ENCODE measurements at regions of chr17 and their contacts with region 1.

Region 1: GRCh38 chr17:59707114-59707970 is at the starts of genes PTRH2 and VMP1:
- DNase-seq: peak; percentile 100
- ATAC-seq: peak; percentile 97
- H3K4me3 ChIP-seq: peak within 1 kb of the TSS; percentile 89 to 95
- H3K27ac ChIP-seq: peak within 1 kb of the TSS; percentile 87
- H3K4me1 ChIP-seq: peaks cover 19 to 34% of the 10 kb centered on the region in 2 experiments; a peak in 3 of 4 replicates
- H3K27me3 ChIP-seq: no peaks in the 10 kb centered on the region
- CTCF ChIP-seq: no peak
- POLR2A ChIP-seq: peak; percentile 93
- RAD21 ChIP-seq: no peak
- total RNA-seq, gene PTRH2: 59.6 TPM
- total RNA-seq, gene VMP1: 366 TPM

Region 2: DNA sequence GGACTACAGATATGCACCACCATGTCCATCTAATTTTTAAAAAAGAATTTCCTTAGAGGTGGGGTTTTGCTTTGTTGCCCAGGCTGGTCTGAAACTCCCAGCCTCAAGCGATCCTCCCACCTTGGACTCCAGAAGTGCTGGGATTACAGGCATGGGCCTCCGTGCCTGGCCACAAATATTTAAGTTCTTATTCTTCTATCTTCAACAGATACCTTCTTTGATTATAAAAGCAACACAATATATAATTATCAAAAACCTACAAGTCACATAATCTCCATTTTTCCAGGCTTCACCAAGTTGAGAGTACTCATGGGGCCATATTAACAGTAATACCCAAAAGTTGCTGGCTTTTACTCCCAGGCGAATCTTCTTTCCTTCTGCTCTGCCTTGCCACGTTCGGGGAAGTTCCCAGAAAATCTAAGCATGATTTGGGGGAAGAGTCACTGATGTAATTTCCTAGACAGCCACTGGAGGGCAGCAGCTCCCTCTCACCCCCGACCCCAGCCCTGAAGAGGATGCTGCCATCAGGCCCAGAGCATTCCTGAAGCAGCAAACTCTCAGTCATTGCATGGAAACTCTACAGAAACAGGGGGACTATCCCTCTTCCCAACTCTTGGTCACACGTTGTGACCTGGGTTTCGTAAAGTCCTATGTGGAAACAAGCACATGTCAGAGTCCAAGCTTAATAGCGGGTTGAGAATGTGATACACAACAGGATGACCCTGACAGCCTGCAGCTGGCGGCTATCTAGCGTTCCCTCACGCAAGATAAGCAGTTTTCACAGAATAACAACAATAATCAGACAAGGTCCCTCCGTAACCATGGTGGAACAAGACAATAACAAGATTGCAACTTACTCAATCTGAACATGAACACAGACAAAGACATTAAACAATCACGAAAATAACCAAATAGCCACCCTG is 185.9 kb before region 1 on chr17:
- CTCF ChIA-PET with region 1: no interaction called
- POLR2A ChIA-PET with region 1: no interaction called
- RAD21 ChIA-PET with region 1: no interaction called
- intact Hi-C with region 1: no loop called
- DNase-seq: peak; percentile 49
- ATAC-seq: peak; percentile 98
- H3K4me3 ChIP-seq: no peak overlapping the region
- H3K27ac ChIP-seq: no peak overlapping the region
- H3K4me1 ChIP-seq: peaks cover 0 to 10% of the 10 kb centered on the region in 2 experiments; a peak in 2 of 4 replicates
- H3K27me3 ChIP-seq: no peaks in the 10 kb centered on the region
- CTCF ChIP-seq: peak; percentile 82 to 98 (median 96)
- POLR2A ChIP-seq: no peak
- RAD21 ChIP-seq: peak; percentile 92

Region 3: DNA sequence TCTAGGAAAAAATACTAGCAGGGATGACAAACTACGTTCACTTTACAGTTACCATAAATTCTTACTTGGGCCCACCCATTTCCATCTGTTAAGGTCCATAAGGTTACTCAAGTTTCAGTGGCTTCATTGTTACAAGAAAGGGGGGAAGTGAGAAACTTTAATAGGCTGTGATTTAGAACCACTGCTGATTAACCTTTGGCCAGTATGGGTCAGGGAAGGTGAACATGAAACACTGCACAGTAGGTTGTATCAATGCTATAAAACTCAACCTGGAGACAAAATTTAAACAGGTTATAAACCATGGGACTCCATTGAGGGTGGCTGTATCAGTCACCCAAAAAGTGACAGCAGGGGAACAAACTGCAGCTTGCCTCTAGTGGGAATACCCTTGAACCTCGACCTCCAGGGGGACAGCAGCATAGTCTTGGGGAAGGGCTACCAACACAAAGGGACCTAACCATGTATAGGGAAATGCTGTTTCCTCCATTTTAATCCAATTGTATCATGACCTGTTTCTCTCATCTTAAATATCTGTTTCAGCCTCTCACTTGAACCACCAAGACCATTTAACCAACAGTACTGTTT is 10.6 kb before region 1 on chr17:
- CTCF ChIA-PET with region 1: no interaction called
- POLR2A ChIA-PET with region 1: interaction called, 12 read pairs
- RAD21 ChIA-PET with region 1: no interaction called
- intact Hi-C with region 1: no loop called
- DNase-seq: no peak
- ATAC-seq: peak; percentile 24; the same call in 1 of the 2 replicates
- H3K4me3 ChIP-seq: no peak overlapping the region
- H3K27ac ChIP-seq: no peak overlapping the region
- H3K4me1 ChIP-seq: no peaks in the 10 kb centered on the region
- H3K27me3 ChIP-seq: no peaks in the 10 kb centered on the region
- CTCF ChIP-seq: no peak
- POLR2A ChIP-seq: no peak
- RAD21 ChIP-seq: no peak

Region 4: DNA sequence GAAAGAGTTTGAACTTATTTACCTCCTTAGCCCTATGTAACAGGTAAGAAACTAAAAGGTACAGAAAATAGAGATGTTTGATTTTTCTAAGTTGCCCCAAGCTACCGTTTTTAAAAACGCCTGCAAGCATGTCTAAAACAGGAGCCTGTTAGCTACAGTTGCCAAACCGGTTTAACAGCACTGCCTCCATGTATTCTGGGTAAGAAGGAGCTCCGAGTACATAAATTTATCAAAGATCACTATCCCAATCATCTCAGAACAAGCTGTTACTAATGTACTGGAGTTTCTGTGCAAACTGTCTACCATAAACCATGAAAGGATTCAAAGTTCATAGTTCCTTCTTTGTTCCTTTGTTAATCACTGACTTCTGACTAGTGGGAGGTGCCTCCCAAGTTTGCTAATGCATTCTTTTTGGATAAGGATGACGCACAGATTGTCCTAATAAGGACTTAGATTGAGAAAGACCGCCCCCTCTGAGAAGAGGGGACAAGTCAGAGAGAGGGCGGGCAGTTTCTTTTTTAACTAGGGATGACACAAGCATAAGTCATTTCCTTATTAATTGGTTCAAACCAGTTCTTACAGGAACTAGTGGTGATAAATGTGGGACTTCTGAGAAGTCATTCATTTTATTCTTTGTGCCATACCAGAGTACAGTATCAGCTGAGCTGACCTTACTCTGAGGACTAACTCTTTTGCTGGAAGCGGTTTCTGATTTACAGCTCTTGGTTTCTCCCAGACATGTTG is 130.1 kb after region 1 on chr17:
- CTCF ChIA-PET with region 1: no interaction called
- POLR2A ChIA-PET with region 1: interaction called, 18 read pairs
- RAD21 ChIA-PET with region 1: no interaction called
- intact Hi-C with region 1: no loop called
- DNase-seq: peak; percentile 100
- ATAC-seq: peak; percentile 81
- H3K4me3 ChIP-seq: peak overlapping the region; percentile 74 to 78
- H3K27ac ChIP-seq: peak overlapping the region; percentile 97
- H3K4me1 ChIP-seq: peaks cover 65 to 84% of the 10 kb centered on the region in 2 experiments
- H3K27me3 ChIP-seq: no peaks in the 10 kb centered on the region
- CTCF ChIP-seq: no peak
- POLR2A ChIP-seq: peak; percentile 99
- RAD21 ChIP-seq: no peak

Region 5: DNA sequence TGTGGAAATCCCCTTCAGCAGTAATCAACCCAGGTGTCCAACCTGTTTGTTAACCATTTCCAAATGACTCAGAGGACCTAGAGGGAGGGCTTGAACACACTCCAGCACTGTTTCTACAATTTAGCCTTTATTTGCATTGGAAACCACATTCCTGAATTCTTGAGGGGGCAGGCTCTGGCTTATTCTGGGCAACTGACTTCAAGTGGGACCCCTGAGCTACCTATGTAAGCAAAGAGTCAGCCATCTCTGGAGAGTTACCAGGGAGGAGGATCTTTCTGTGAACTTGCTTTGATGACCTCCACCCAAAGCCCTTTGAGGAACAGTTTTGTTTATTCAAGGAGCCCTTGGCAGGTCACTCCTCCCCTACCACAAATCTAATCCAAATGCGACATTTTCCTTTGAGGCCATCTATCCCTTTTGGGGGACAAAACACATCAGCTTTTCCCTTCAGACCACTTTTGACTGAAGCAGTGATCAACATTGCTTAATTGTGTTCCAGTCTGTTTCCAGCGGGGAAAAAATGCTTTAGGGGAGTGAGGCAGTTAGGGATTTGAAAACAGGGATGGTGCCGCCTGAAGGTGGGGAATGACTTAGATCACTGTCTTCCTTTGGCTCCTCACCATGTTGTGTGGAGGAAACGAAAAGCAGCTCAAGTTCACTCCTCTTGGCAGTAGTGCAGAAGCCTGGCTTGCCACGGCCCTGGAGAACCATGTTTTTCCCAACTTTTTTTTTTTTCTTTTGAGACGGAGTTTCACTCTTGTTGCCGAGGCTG is 139.2 kb after region 1 on chr17:
- CTCF ChIA-PET with region 1: no interaction called
- POLR2A ChIA-PET with region 1: interaction called, 18 read pairs
- RAD21 ChIA-PET with region 1: interaction called in 1 of 2 experiments, 3 read pairs
- intact Hi-C with region 1: no loop called
- DNase-seq: peak; percentile 94
- ATAC-seq: peak; percentile 30
- H3K4me3 ChIP-seq: peak overlapping the region; percentile 9 to 32; a peak in 3 of 4 replicates
- H3K27ac ChIP-seq: peak overlapping the region; percentile 97
- H3K4me1 ChIP-seq: peaks cover 76 to 97% of the 10 kb centered on the region in 2 experiments
- H3K27me3 ChIP-seq: no peaks in the 10 kb centered on the region
- CTCF ChIP-seq: no peak
- POLR2A ChIP-seq: no peak
- RAD21 ChIP-seq: no peak

Region 6: DNA sequence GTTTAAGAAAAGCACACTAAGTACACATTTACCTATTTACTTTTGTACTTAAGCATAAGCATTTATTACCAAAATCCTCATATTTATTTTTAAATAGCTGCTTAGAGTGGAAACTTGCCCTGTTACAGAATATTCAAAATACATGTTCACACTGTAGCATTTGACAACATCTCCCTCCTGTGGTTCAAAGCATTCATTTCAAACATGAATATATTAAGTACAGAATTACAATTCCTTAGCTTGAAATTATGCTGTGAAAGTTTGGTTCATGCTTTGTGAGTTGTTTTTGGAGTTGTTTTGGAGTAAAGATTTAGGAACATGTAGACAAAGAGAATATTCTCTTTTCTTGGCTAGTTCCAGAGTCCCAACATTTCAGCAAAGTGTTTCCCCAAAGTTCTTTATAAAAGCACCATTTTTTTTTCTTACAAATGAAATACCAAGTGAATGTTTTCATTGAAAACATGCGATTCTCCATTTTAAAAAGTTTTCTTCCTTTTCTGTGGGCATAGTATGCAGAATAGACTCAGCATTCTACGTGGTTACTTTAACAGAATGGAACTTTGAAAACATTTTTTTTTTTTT is 152.2 kb after region 1 on chr17:
- CTCF ChIA-PET with region 1: interaction called, 16 read pairs
- POLR2A ChIA-PET with region 1: no interaction called
- RAD21 ChIA-PET with region 1: interaction called in 1 of 2 experiments, 3 read pairs
- intact Hi-C with region 1: no loop called
- DNase-seq: no peak
- ATAC-seq: peak; percentile 67
- H3K4me3 ChIP-seq: no peak overlapping the region
- H3K27ac ChIP-seq: no peak overlapping the region
- H3K4me1 ChIP-seq: peaks cover 18 to 32% of the 10 kb centered on the region in 2 experiments; a peak in 3 of 4 replicates
- H3K27me3 ChIP-seq: no peaks in the 10 kb centered on the region
- CTCF ChIP-seq: peak; percentile 44 to 88 (median 80); a peak in 4 of 6 replicates
- POLR2A ChIP-seq: no peak
- RAD21 ChIP-seq: peak; percentile 97

Measured in HCT116 (cell line).